ENCODE measurements at regions of chr15 and their contacts with region 1.

Region 1: GRCh38 chr15:83973816-83974215 is 261.8 kb upstream of the GOLGA6L4 start:
- DNase-seq: no peak
- H3K4me3 ChIP-seq: no peak overlapping the region
- H3K27ac ChIP-seq: no peak overlapping the region
- H3K4me1 ChIP-seq: no peaks in the 10 kb centered on the region
- H3K27me3 ChIP-seq: no peaks in the 10 kb centered on the region
- CTCF ChIP-seq: peak; percentile 42 to 67 (median 62); a peak in 3 of 4 replicates
- EP300 ChIP-seq: no peak
- POLR2A ChIP-seq: no peak
- RAD21 ChIP-seq: peak in 1 of 2 experiments; percentile 57; a peak in 2 of 4 replicates

Region 2: DNA sequence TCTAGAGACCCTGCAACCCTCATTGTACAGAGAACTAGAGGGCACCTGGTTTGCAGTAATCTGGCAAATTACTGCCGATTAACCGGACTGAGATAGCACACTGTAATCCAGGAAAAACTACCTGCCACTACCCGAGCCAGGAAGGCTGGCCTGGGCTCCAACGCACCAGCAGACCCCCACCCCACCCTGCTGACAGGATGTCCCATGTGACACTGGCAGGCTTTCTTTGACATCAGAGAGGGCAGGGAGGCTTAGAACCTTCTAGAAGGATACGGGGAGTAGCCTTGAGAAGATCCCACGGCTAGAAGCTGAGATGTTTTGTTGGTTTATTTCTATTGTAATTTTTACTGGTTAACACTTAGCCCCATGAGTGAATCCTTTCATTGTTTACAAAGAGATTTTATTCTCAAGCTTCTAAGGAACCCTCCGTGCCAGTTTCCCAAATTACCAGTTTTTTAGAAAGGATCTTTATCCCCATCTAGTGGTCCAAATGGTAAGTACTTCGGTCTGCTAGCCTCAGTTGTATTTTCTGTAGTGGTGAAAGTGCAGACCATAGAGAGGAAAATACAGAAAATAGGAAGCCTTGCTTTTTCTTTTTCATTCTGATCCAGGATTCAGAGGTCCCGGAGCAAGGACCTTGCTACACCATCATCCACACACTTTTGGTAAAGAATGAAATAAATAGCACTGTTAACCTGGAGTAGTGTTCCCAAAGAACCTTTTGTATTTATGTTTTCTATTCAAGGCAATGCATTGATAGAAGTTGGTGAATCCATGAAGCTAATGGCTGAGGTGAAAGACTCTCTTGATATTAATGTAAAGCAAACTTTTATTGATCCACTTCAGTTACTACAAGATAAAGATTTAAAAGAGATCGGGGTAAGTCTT is 401.8 kb before region 1 on chr15:
- CTCF ChIA-PET with region 1: no interaction called
- POLR2A ChIA-PET with region 1: no interaction called
- DNase-seq: peak in 1 of 2 experiments; percentile 53
- H3K4me3 ChIP-seq: no peak overlapping the region
- H3K27ac ChIP-seq: no peak overlapping the region
- H3K4me1 ChIP-seq: no peaks in the 10 kb centered on the region
- H3K27me3 ChIP-seq: no peaks in the 10 kb centered on the region
- CTCF ChIP-seq: peak in 2 of 3 experiments; percentile 55 to 56; a peak in 3 of 4 replicates
- EP300 ChIP-seq: no peak
- POLR2A ChIP-seq: no peak
- RAD21 ChIP-seq: peak; percentile 56 to 70

Region 3: GRCh38 chr15:83992324-83993031 is 18.7 kb after region 1 on chr15:
- CTCF ChIA-PET with region 1: interaction called, 15 read pairs
- POLR2A ChIA-PET with region 1: no interaction called
- DNase-seq: no peak
- H3K4me3 ChIP-seq: no peak overlapping the region
- H3K27ac ChIP-seq: no peak overlapping the region
- H3K4me1 ChIP-seq: no peaks in the 10 kb centered on the region
- H3K27me3 ChIP-seq: peaks cover 0 to 2% (median 0%) of the 10 kb centered on the region in 4 experiments; a peak in 1 of 7 replicates
- CTCF ChIP-seq: no peak
- EP300 ChIP-seq: no peak
- POLR2A ChIP-seq: no peak
- RAD21 ChIP-seq: no peak

Region 4: GRCh38 chr15:84079885-84080777 is 106.3 kb after region 1 on chr15:
- CTCF ChIA-PET with region 1: no interaction called
- POLR2A ChIA-PET with region 1: no interaction called
- DNase-seq: peak in 1 of 2 experiments; percentile 85
- H3K4me3 ChIP-seq: peak overlapping the region; percentile 64 to 75 (median 72)
- H3K27ac ChIP-seq: no peak overlapping the region
- H3K4me1 ChIP-seq: no peaks in the 10 kb centered on the region
- H3K27me3 ChIP-seq: peaks cover 3 to 27% (median 13%) of the 10 kb centered on the region in 4 experiments
- CTCF ChIP-seq: no peak
- EP300 ChIP-seq: no peak
- POLR2A ChIP-seq: no peak
- RAD21 ChIP-seq: no peak

Measured in H1 (cell line).